ENCODE measurements at regions of chr17 and their contacts with region 1.

Region 1: DNA sequence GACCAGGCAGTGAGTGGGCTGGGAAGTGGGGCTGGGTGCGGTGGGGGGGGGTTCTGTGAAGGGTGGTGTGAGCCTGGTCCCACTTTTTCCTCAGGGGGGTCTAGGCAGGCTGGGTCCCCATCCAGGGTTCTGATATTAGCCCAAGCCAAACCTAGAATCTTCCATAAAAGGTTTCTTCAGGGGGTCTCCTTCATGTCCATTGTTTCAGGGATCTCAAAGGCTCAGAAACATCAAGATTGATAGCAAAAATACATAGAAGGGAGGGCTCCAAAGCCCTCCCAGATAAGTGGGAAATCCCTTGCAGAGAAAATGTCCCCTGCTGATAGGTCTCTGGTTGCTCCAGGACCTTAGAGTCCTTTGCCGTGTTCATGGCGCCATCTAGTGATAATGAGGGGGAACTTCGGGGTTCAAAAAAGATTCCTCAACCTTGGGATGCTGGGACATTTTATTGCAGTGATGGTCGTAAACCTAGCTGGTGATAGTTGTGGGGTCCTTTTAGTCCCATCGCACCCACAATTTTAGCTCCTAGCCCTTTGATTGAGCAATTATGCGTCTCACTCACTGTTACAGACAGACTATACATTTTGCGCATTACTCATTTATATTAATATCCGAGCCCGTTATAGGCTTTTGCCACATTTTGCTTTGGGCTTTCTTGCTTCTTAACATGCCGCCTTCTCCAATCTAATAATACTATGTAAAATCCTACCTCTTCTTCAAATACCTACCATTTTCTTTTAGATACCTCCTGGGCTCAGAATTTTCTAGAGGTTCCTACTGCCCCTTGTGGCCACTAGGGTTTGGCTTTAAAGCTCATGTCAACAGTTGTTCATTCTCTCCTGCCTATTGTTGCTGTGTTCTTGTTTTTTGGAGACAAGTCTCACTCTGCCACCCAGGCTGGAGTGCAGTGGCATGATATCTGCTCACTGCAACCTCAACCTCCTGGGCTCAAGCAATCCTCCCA is 35.1 kb downstream of the IGF2BP1 start:
- DNase-seq: peak; percentile 81
- H3K4me3 ChIP-seq: no peak overlapping the region
- H3K27ac ChIP-seq: no peak overlapping the region
- H3K4me1 ChIP-seq: no peaks in the 10 kb centered on the region
- H3K27me3 ChIP-seq: no peaks in the 10 kb centered on the region

Region 2: GRCh38 chr17:48816774-48817590 is 215.3 kb before region 1 on chr17 and contains the start of gene TTLL6:
- in situ Hi-C with region 1: loop called (anchors 10 kb)
- DNase-seq: peak; percentile 67
- H3K4me3 ChIP-seq: peak within 1 kb of the TSS; percentile 61
- H3K27ac ChIP-seq: no peak within 1 kb of the TSS
- H3K4me1 ChIP-seq: no peaks in the 10 kb centered on the region
- H3K27me3 ChIP-seq: peaks cover 19% of the 10 kb centered on the region
- total RNA-seq, gene TTLL6: not detected in 2 replicates

Region 3: DNA sequence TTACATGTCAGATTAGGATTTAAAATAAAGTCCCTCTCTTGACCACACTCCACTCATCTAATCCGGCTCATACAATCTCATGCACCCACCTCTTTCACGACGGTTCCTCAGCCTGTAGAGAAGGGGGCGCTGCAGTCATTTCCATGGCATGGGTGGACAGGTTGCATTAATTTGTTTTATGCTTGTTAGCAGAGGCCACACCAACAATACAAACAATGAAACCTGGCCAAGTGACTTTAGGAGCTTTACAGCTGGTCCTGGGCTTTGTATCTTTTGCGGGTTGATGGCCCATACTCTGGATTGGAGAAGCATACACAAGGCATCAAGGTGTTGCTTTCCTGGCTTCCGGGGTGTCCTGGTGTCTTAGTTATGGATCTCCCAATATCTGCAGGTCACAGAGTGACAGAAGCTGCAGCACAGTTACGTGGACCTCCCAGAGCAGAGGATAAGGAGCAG is 77.9 kb before region 1 on chr17:
- in situ Hi-C with region 1: loop called (anchors 5 kb)
- DNase-seq: peak; percentile 69
- H3K4me3 ChIP-seq: no peak overlapping the region
- H3K27ac ChIP-seq: no peak overlapping the region
- H3K4me1 ChIP-seq: no peaks in the 10 kb centered on the region
- H3K27me3 ChIP-seq: no peaks in the 10 kb centered on the region

Measured in GM23248 (cell line).